ENCODE measurements at regions of chr1 and their contacts with region 1.

Region 1: DNA sequence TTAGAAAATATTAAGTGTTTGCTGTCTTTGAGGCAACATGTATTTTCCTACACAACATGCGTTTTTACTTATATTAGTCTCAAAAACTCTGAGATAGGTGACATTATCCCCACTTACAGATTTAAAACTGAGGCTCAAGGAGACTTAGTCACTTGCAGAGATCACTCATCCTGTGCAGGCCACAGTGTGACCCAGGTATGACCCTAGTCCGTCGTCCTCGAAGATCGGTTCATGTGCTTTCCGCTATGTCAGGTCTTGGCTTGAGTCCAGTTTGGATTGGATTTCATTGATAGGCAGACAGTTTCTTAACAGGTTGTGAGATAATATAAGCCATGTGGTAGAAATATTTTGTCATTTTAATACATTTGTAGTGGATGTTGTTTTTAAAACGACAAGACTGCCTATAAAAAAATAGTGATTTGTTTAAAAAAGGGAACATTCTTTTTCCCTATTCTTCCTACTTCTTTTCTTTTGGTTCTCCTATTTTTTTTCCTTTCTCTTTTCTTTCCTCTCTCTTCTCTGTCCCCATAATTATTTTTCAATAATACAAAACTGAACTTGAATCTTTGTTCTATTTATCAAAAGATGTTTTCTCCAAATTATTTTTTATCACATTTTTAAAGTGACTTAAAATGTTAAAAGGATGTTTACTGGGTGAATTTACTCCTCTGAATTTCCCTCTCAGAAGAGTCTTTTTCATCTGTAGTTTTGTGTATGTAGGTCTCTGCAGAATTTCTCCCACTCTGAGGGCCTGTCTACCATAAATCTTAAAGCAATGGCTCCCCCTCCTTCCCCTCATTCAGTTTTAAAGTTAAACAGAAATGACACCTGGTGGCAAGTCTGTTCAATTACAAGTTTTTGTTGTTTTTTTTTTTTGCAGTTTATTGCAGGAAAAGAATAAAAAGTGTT is 81.8 kb downstream of the PHTF1 start:
- DNase-seq: no peak
- H3K4me3 ChIP-seq: no peak overlapping the region
- H3K27ac ChIP-seq: no peak overlapping the region
- H3K4me1 ChIP-seq: peaks cover 0 to 8% (median 0%) of the 10 kb centered on the region in 3 donors
- H3K27me3 ChIP-seq: no peaks in the 10 kb centered on the region
- CTCF ChIP-seq: peak in 5 of 6 experiments; percentile 28 to 53 (median 48)
- POLR2A ChIP-seq: no peak

Region 2: GRCh38 chr1:113140588-113141446 is 536.7 kb before region 1 on chr1:
- intact Hi-C with region 1: loop called (anchors 10 kb)
- DNase-seq: no peak
- H3K4me3 ChIP-seq: peak overlapping the region in 1 of 4 donors; percentile 35
- H3K27ac ChIP-seq: peak overlapping the region in 3 of 4 donors; percentile 2 to 49 (median 38)
- H3K4me1 ChIP-seq: peaks cover 16 to 31% (median 19%) of the 10 kb centered on the region in 3 donors
- H3K27me3 ChIP-seq: no peaks in the 10 kb centered on the region
- CTCF ChIP-seq: peak; percentile 60 to 89 (median 84)
- POLR2A ChIP-seq: no peak